ENCODE measurements at regions of chr1 and their contacts with region 1.

Region 1: DNA sequence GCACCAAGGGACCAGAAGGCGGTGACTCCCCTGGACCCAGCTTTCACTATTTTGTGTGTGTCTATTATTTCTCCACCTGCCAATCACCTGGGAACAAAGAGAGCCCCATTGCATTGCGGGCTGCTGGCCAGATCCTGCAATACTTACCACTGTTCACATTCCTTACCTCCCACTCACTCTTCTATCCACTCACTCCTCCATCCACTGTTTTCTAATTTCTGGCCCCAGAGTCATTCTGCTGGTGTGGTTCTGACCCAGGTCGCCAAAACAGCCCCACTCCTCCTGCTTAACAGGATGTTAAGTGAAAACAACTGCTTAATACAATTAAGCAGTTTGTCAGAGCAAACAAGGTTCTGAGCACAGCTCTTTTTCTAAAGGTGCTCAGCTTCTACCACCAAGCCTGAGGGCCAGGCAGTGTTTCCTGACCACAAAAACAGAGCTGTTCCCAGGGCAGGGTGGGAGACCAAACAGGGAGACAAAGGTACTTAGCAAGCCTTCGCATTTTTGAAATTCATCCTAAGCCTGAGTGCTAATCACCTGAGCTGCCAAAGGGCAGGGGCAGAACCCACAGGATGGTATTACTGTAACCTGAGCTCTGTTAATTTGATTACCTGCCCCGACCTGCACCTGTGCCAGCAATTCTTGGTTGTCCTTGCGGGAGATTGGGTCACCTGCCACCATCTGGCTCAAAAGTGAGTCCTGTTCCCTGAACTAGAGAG is 38.5 kb upstream of the EFCAB14 start:
- DNase-seq: peak; percentile 72
- H3K4me3 Mint-ChIP-seq: peak overlapping the region; percentile 59
- H3K27ac Mint-ChIP-seq: peak overlapping the region; percentile 93
- H3K4me1 Mint-ChIP-seq: peaks cover 91% of the 10 kb centered on the region
- H3K27me3 Mint-ChIP-seq: no peaks in the 10 kb centered on the region
- CTCF ChIP-seq: no peak

Region 2: DNA sequence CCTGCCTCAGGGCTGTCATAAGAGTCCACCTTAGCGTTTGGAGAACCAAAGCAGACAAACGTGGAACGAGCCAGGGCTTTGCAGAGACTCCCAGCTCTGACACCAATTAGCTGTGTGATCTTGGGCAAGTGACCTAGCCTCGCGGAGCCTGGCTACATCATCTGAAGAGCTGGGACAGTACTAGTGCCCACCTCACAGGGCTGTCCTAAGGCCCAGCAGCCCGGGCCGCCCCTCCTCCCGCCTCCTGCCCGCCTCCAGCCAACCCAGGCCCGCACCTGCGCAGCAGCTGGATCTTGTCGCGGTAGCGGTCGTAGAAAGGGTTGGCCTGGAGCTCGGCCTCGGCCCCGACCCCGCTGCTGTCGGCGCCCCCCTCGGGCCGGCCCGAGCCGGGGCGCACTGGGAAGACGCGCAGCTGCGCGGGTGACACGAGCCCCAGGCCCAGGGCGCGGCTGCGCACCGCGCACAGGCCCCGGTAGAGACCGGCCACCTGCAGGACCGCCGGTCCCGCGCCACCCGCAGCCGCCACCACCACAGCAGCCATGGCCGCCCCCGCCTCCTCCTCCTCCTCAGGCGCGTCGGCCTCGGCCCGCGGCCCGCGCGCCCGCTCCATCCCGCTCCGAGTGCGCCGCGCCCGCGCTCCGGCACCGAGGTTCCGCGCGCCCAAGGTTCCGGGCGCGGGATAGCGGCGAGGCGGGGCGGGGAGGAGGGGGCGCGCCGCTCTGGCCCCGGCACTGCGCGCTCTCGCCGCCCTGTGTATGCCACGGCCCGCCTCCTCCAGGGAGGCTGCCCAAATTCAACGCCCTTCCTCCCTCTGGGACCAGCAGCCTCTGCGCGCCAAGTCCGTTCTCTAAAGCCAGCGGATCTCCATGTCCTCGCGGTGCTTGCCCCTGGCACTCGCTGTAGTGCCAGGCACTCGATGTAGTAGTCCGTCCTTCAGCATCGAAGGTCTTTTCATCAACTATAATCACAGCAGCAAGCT is 89.3 kb before region 1 on chr1 and contains the start of gene ATPAF1:
- CTCF ChIA-PET with region 1: no interaction called
- intact Hi-C with region 1: no loop called
- DNase-seq: peak; percentile 74
- H3K4me3 Mint-ChIP-seq: no peak within 1 kb of the TSS
- H3K27ac Mint-ChIP-seq: peak within 1 kb of the TSS; percentile 20
- H3K4me1 Mint-ChIP-seq: peaks cover 15% of the 10 kb centered on the region
- H3K27me3 Mint-ChIP-seq: no peaks in the 10 kb centered on the region
- CTCF ChIP-seq: no peak
- total RNA-seq, gene ATPAF1: 33.9 and 34.5 TPM in 2 replicates

Region 3: GRCh38 chr1:46687093-46687659 is 70.2 kb before region 1 on chr1:
- CTCF ChIA-PET with region 1: no interaction called
- intact Hi-C with region 1: no loop called
- DNase-seq: peak; percentile 70
- H3K4me3 Mint-ChIP-seq: no peak overlapping the region
- H3K27ac Mint-ChIP-seq: no peak overlapping the region
- H3K4me1 Mint-ChIP-seq: peaks cover 21% of the 10 kb centered on the region
- H3K27me3 Mint-ChIP-seq: no peaks in the 10 kb centered on the region
- CTCF ChIP-seq: no peak

Region 4: DNA sequence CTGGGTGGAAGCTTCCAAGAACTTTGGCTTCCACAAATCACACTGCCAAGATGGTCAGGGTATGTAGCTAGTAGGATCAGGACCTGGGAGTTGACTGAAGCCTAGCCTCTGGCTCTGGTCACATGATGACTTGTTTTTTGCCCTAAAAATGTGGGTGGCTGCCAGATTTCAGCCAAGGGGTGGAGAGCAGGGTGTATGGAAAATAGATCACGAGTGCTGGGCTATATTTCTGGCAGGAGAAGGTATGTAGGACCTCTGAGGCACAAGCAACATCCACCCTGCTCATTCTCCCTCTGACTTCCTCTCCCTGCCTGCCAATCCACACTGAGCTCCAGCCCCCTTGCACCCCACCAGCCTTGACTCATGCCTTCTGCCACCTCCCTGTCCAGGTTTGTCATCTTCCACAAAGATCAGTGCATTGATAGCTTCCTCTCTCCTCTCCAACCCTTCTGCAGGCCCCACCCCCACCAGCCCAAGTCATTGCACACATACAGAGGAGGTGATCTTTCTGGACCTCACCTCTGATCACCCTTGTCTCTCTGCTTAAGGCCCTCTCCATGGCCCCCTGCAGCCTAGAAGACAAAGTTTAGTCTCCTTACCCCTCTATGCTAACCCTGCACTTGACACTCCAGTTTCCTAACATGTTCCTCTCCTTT is 33.2 kb after region 1 on chr1:
- CTCF ChIA-PET with region 1: no interaction called
- intact Hi-C with region 1: loop called (anchors 2 kb)
- DNase-seq: no peak
- H3K4me3 Mint-ChIP-seq: no peak overlapping the region
- H3K27ac Mint-ChIP-seq: no peak overlapping the region
- H3K4me1 Mint-ChIP-seq: peaks cover 22% of the 10 kb centered on the region
- H3K27me3 Mint-ChIP-seq: no peaks in the 10 kb centered on the region
- CTCF ChIP-seq: no peak

Region 5: DNA sequence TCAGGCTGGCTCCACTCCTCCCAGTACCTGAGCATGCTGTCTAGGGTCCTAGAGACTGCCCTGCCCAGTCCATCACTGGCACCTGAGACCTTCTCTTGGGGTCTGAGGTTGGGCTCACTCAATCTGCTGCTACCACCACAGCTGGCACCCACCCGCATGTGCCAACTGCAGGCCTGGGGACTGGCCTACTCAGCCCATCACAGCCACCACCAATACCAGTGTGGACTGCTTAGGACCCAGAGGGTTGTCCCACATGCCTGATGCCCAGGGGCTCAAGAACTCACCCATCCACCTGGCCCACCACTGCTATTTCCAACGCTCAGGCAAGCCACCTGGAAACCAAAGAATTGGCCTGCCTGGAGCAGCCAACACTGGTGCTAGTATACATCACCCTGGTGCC is 104.9 kb after region 1 on chr1:
- CTCF ChIA-PET with region 1: no interaction called
- intact Hi-C with region 1: loop called (anchors 2 kb)
- DNase-seq: no peak
- H3K4me3 Mint-ChIP-seq: no peak overlapping the region
- H3K27ac Mint-ChIP-seq: no peak overlapping the region
- H3K4me1 Mint-ChIP-seq: peaks cover 15% of the 10 kb centered on the region
- H3K27me3 Mint-ChIP-seq: no peaks in the 10 kb centered on the region
- CTCF ChIP-seq: no peak

Measured in Calu3 (cell line).